Ovary (tissue), 10 donors: ENCODE measurements at regions of chr3 and their contacts with region 1.

Region 1: DNA sequence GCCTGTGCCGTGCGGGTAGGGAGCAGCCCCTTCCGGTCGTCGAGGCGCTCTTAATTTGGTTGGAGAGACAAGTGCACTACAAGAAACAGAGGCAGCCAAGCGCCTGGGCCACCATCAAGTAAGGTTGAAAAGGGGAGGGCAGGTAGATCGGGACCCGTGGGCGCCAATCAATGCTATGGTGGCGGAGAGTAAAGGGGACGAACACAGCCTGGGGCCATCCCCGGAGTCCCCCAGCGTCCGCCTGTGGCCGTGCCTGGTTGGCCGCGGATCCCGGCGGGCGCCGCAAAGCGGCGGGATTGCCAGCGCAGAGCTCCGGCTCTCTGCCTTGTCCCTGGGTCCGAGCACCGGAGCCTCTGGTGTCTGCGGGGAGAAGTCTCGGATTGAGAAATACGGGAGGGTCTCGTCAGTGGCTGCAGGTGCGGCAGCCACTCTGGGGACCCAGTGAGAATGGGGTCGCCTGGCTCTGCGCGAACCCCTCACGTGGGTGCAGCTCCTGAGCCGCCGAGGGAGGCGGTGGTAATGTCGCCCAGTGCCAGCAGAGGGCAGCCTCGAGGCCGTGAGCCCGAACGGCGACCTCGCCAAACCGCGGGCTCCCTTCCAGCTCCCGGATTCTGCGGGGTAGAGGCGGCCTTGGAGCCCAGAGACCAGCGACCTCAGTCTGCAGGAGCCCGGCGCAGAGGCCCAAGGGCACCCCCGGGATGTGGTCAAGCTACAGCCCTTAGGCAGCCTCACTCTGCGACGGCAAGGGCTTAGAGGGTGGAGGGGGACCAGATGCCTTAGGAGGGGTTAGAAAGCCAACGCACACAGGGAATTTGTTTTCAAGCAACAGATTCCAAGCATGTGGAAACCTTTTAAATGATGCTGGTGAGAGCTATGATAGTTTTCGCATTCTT is 10.8 kb downstream of the FOXL2 start:
- DNase-seq: peak; percentile 91 to 96 (median 95)
- H3K4me3 ChIP-seq: peak overlapping the region; percentile 32
- H3K27ac ChIP-seq: peak overlapping the region; percentile 17 to 100
- H3K4me1 ChIP-seq: peaks cover 15% of the 10 kb centered on the region
- H3K27me3 ChIP-seq: no peaks in the 10 kb centered on the region
- CTCF ChIP-seq: peak; percentile 91 to 94 (median 94)
- EP300 ChIP-seq: no peak
- POLR2A ChIP-seq: no peak

Region 2: GRCh38 chr3:138984816-138985215 is 48.7 kb after region 1 on chr3:
- intact Hi-C with region 1: loop called in 1 of 4 experiments (anchors 5 kb)
- DNase-seq: no peak
- H3K4me3 ChIP-seq: no peak overlapping the region
- H3K27ac ChIP-seq: no peak overlapping the region
- H3K4me1 ChIP-seq: peaks cover 4% of the 10 kb centered on the region
- H3K27me3 ChIP-seq: no peaks in the 10 kb centered on the region
- CTCF ChIP-seq: no peak
- EP300 ChIP-seq: no peak
- POLR2A ChIP-seq: no peak

Region 3: GRCh38 chr3:138995706-138996105 is 59.6 kb after region 1 on chr3:
- intact Hi-C with region 1: no loop called
- DNase-seq: no peak
- H3K4me3 ChIP-seq: no peak overlapping the region
- H3K27ac ChIP-seq: no peak overlapping the region
- H3K4me1 ChIP-seq: no peaks in the 10 kb centered on the region
- H3K27me3 ChIP-seq: no peaks in the 10 kb centered on the region
- CTCF ChIP-seq: no peak
- EP300 ChIP-seq: no peak
- POLR2A ChIP-seq: no peak

Region 4: DNA sequence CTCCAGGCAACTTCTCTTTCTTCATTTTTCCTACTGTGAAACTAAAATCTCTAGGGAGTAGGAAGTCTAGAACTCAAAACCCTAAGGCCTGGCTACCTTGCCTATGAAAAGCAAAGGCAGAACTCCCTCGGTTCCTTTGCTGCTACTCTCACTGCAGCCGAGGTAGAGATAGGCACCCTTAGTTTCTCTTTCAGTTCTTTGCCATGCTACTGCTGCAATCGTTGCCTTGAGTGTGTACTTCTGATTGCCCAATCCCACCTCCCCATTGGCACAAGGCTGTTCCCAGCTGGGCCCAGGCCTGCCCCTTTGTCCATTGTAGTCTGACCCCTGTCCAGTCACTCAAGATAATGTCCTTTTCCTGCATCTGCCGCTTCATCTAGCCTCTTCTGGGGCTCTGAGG is 315.4 kb after region 1 on chr3:
- intact Hi-C with region 1: loop called in 1 of 4 experiments (anchors 2 kb)
- DNase-seq: peak; percentile 49 to 74 (median 66)
- H3K4me3 ChIP-seq: no peak overlapping the region
- H3K27ac ChIP-seq: peak overlapping the region in 1 of 2 donors; percentile 37
- H3K4me1 ChIP-seq: peaks cover 37% of the 10 kb centered on the region
- H3K27me3 ChIP-seq: no peaks in the 10 kb centered on the region
- CTCF ChIP-seq: no peak
- EP300 ChIP-seq: no peak
- POLR2A ChIP-seq: no peak

Region 5: GRCh38 chr3:139329345-139329850 is 393.3 kb after region 1 on chr3:
- intact Hi-C with region 1: loop called (anchors 5 to 10 kb)
- DNase-seq: peak; percentile 89 to 96 (median 94)
- H3K4me3 ChIP-seq: no peak overlapping the region
- H3K27ac ChIP-seq: no peak overlapping the region
- H3K4me1 ChIP-seq: no peaks in the 10 kb centered on the region
- H3K27me3 ChIP-seq: no peaks in the 10 kb centered on the region
- CTCF ChIP-seq: peak; percentile 98 to 99 (median 99)
- EP300 ChIP-seq: no peak
- POLR2A ChIP-seq: no peak